ENCODE measurements at regions of chr5 and their contacts with region 1.

Region 1: DNA sequence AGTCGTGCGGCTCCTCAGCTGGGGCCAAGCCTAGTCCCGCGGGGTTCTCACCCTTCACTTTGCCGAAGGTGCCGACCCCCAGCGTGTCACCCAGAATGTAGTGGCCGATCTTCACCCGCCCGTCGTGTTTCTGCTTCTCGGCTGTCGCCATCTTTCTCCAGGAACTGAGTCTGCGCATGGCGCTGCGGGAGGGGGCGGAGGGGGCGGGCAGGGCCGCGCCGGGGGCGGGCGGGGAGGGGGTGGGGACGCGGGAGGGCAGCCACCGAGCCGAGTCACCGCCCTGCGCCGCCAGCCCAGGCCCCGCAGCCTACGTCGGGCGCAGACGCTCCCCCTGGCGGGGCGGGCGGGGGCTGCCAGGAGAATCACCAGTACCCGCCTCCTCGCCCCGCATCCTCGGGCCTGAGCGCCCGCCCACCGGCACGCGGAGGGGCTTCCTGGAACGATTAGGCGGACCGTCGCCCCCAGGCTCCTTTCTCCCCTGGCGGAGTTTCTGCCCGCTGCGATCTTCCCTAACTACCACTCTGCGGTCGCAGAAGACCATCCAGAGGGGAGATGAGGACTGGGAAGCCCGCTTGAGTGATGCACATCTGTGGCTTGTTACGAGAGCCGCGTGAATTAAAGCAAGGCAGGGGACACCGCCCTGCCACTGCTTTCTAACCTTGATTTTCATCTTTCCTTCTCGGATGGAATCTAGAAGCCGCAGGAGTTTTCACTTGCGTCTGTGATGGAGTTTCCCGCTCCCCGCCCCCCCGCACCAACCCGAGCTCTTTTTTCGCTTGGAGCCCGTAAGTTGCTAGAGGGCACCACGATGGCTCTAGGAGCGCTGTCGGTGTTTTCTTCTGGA is at the start of gene PRKAA1:
- DNase-seq: peak; percentile 86
- H3K4me3 Mint-ChIP-seq: peak within 1 kb of the TSS; percentile 88
- H3K27ac Mint-ChIP-seq: peak within 1 kb of the TSS; percentile 90
- H3K4me1 Mint-ChIP-seq: peaks cover 32% of the 10 kb centered on the region
- H3K27me3 Mint-ChIP-seq: peaks cover 9% of the 10 kb centered on the region
- total RNA-seq, gene PRKAA1: 61.2 and 61.7 TPM in 2 replicates

Region 2: GRCh38 chr5:40775846-40776657 is 22.2 kb before region 1 on chr5:
- intact Hi-C with region 1: loop called (anchors 2 kb)
- DNase-seq: no peak
- H3K4me3 Mint-ChIP-seq: no peak overlapping the region
- H3K27ac Mint-ChIP-seq: peak overlapping the region; percentile 51
- H3K4me1 Mint-ChIP-seq: peaks cover 17% of the 10 kb centered on the region
- H3K27me3 Mint-ChIP-seq: no peaks in the 10 kb centered on the region

Region 3: GRCh38 chr5:40813698-40814281 is 15.6 kb after region 1 on chr5:
- intact Hi-C with region 1: loop called (anchors 1 kb)
- DNase-seq: no peak
- H3K4me3 Mint-ChIP-seq: no peak overlapping the region
- H3K27ac Mint-ChIP-seq: peak overlapping the region; percentile 29
- H3K4me1 Mint-ChIP-seq: peaks cover 13% of the 10 kb centered on the region
- H3K27me3 Mint-ChIP-seq: no peaks in the 10 kb centered on the region

Measured in activated T-helper 2 cell treated with anti-CD3 and anti-CD28 coated beads, Interferon-gamma antibody, Interleukin-2, Interleukin-4, amounts not matched to agents 10 μg/mL and 5 μg/mL and 100 μg/mL, durations not matched to agents 14 hours and 24 hours and 36 hours (primary cell).